ENCODE measurements at regions of chr18 and their contacts with region 1.

Region 1: DNA sequence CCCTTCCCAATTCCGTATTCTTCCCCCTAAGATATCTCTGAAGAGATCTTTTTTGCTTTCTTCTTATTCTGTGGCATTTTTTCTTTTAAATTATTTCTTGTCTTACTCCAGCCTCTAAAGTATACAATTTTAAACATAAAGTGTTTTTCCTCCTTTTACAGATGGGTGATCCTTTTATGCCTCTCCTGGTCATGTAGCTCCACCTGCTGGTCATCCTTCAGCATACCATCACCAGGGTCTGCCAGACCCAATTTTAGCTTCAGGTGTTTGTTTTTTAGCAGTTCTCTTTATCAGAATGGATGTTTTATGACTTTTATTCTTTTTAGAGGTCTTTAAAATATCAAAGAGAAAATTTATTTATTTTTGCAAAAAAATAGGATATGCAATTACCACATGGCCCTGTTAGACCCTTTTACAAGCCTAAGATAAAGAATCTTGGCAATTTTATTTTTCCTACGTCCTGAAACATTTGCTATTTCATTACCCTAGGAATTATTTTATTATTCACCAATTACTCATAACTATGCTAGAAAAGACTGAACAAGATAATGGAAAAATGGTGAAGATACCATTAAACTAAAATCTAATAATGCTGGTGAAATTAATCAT is 55.5 kb downstream of the PIGN start:
- DNase-seq: no peak
- ATAC-seq: peak; percentile 79

Region 2: GRCh38 chr18:61551586-61551985 is 579.8 kb before region 1 on chr18:
- intact Hi-C with region 1: loop called (anchors 5 kb)
- DNase-seq: no peak
- ATAC-seq: peak; percentile 85

Region 3: GRCh38 chr18:61635901-61636528 is 495.4 kb before region 1 on chr18:
- intact Hi-C with region 1: loop called (anchors 5 kb)
- DNase-seq: peak; percentile 53
- ATAC-seq: peak; percentile 91

Region 4: DNA sequence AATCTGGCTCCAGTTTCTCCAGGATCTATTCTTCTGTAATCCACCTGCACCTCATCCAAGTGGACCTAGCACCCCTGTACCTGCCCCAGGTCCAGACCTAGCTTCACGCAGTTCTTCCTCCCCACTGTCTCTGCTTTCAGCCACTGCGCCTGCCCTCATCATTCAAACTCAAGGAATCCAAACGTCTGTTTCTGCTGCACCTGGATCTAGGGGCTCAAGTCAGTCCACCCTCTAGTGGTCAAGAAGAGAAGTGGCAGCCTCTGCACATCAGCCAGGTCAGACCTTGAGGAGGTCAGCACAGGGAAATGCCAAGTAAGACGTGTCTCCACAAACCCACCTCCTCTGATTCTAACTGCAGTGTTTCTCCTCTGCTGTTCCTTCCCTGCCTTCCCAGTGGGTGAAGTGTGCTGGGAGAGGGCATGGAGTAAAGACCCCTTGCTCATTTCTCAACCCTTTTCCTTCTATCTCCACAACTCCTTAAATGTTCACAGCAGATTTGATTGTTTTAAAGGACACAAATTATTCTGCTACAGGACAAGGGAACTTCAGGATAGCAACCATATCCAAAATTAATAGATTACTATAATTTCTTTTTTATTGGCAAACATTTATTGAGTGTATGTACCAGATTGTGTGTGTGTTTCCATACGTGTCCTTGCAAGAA is 229.9 kb before region 1 on chr18:
- intact Hi-C with region 1: loop called (anchors 10 kb)
- DNase-seq: no peak
- ATAC-seq: peak; percentile 89

Region 5: GRCh38 chr18:62209046-62209445 is 77.6 kb after region 1 on chr18:
- intact Hi-C with region 1: no loop called
- DNase-seq: no peak
- ATAC-seq: no peak

Measured in Right ventricle myocardium superior (tissue), 1 donor.